Thyroid gland (tissue), 4 donors: ENCODE measurements at regions of chr14 and their contacts with region 1.

Region 1: DNA sequence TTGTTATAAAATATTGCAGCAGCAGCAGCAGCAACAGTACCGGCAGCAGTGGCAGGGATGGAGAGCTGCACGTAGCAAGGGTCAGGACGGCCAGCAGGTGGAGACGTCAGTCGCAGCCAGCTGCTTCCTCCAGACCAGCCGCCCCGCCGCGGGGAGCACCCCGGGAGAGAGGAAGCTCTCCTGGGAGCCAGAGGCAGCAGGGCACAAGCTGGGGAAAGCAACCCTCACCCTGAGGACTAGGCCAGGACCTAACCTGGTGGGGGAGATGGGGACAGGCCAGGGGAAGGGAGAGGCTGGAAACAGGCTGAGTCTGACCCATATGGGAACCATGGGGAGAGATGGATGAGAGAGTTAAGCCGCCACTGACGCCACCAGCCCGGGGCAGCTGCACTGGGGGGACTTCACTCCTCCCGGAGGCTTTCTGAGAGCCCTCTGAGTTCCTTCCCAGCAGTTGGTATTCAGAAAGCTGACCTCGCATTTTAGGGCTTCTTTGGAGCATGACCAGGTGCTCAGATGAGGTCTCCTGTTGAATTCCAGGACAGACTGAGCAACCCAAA is 56.3 kb downstream of the SPTB start:
- DNase-seq: peak; percentile 81 to 86
- H3K4me3 ChIP-seq: no peak overlapping the region
- H3K27ac ChIP-seq: no peak overlapping the region
- H3K4me1 ChIP-seq: peaks cover 0 to 9% of the 10 kb centered on the region in 2 donors
- H3K27me3 ChIP-seq: no peaks in the 10 kb centered on the region
- CTCF ChIP-seq: peak; percentile 47 to 92 (median 74)
- POLR2A ChIP-seq: no peak

Region 2: GRCh38 chr14:64891839-64892375 is 68.5 kb after region 1 on chr14:
- intact Hi-C with region 1: loop called (anchors 5 kb)
- DNase-seq: no peak
- H3K4me3 ChIP-seq: no peak overlapping the region
- H3K27ac ChIP-seq: no peak overlapping the region
- H3K4me1 ChIP-seq: no peaks in the 10 kb centered on the region
- H3K27me3 ChIP-seq: no peaks in the 10 kb centered on the region
- CTCF ChIP-seq: peak; percentile 20 to 86 (median 48)
- POLR2A ChIP-seq: no peak

Region 3: DNA sequence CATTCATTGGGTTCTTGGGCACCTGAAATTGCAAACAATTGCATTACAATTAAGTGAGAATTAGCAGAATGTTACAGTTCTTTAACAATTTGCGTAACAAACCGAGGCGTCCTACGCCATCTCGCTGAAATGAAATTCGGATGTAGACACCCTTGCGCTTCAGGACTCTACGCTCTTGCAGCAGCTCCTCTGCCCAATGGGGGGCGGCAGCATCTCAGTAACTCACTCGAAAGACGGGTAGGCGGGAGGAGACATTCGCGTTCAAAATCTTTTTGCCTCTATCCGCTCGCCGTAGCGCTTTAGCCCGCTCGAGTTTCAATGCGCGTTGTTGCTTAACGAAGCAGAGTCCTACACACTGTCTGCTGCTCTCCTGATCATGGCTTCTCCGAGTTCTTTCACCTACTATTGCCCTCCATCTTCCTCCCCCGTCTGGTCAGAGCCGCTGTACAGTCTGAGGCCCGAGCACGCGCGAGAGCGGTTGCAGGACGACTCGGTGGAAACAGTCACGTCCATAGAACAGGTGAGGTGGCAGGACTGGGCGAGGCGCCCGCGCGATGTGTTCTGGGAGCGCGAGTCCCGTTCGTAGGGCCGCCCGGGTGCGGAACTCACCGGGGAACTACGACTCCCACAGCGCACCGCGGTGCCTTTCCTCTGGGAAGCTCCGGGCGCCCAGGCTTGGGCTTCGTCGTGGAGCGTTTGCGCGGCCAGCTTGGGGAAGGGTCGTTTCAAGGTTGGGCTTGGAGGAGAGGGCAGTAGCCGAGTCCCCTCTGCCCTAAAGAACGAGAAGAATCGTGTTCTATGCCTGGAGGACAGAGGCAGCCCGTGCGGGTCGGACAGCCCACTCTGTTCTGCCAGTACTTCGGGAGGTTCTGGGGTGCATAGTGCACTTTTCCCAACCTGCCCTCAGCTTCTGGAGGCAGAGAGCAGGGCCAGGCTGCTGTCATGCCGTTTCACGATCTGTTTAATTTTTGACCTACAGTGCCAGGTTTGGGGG is 163.5 kb after region 1 on chr14 and contains the start of gene FNTB:
- intact Hi-C with region 1: loop called (anchors 10 kb)
- DNase-seq: peak; percentile 96 to 98
- H3K4me3 ChIP-seq: peak within 1 kb of the TSS; percentile 62 to 82 (median 74)
- H3K27ac ChIP-seq: peak within 1 kb of the TSS; percentile 62 to 95 (median 95)
- H3K4me1 ChIP-seq: peaks cover 9 to 21% of the 10 kb centered on the region in 2 donors
- H3K27me3 ChIP-seq: no peaks in the 10 kb centered on the region
- CTCF ChIP-seq: peak; percentile 47 to 75 (median 70)
- POLR2A ChIP-seq: peak in 1 of 2 donors; percentile 63
- total RNA-seq, gene FNTB: 7.8 to 27.0 (median 18.8) TPM